ENCODE measurements at regions of chr1 and their contacts with region 1.

Region 1: DNA sequence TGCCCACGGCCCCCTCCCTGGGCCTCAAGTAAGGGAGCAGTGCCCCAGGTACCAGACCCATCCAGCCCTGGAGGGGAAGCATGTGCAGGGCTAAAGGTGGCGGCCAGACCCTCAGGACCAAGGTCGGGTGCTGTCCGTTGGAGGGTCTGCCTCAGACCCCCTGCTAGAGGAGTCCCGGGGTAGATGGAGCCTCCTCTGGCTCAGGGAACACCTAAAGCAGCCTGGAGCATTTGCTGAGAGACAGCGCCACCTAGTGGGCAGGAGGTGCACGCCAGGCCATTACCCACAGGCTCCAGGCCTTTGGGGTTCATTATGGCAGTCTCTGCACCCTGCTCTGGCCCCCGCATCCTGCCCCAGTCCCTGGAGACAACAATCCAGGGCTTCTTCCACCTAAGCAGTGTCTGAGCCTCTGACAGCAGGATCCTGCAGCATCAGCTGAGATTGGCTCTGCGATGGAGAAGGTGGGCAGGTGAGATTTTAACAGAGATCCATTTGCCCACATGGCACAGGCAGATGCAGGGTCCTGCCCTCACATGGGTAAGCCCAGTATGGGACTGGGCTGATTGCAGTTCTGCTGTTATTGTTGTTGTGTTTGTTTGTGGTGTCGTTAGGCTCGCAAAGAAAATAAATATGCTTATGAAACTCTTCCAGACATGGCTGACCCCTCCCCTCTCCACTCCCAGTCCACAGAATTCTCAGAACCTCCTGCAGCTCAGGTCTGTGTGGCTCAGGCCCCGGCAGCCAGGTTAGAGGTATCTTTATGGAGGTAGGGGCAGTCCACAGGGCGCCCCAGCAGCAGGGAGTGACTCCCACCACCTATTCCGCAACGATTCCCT is 42.4 kb downstream of the CTNNBIP1 start:
- DNase-seq: peak; percentile 80 to 90
- ATAC-seq: peak; percentile 84 to 94 (median 87)
- H3K4me3 ChIP-seq: no peak overlapping the region
- H3K27ac ChIP-seq: no peak overlapping the region
- H3K4me1 ChIP-seq: peaks cover 18% of the 10 kb centered on the region
- H3K27me3 ChIP-seq: no peaks in the 10 kb centered on the region
- CTCF ChIP-seq: peak; percentile 99

Region 2: DNA sequence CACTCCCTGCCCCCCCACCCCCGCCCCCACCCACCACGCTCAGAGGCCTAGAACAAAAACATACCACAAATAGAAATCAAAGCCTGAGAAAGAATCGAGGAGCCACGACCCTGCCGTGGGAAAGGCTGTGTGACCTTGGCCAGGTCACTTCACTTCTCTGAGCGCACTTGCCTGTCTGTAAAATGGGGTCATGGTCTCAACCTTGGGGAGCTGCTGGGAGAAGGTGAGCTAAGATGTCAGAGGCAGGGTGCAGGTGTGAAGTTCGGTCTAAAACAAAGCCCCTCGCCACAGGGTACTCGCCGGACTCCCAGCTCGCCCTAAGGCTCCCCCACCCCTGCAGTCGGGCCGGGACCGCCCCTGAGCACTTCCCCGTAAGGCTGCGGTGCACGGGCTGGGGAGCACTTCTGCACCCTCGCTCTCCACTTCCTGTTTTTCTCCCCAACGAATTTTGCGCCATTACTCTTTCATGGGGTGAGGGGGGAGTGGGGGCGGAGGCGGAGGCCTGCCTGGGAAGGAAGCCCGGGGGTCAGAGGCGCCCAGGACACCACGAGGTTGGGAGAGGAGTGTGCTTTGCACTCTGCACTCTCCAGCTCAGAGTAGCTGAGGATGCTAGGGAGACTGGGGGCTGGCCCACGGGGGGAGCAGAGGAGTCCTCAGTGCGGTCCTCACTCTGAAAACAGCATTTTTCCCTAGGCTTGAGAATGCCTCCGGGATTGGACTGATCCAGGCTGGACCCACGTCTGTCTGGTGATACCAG is 238.0 kb before region 1 on chr1:
- intact Hi-C with region 1: loop called (anchors 2 to 5 kb)
- DNase-seq: peak; percentile 46 to 73
- ATAC-seq: peak in 3 of 4 donors; percentile 16 to 18 (median 16)
- H3K4me3 ChIP-seq: no peak overlapping the region
- H3K27ac ChIP-seq: no peak overlapping the region
- H3K4me1 ChIP-seq: no peaks in the 10 kb centered on the region
- H3K27me3 ChIP-seq: peaks cover 0 to 2% (median 0%) of the 10 kb centered on the region in 3 donors
- CTCF ChIP-seq: no peak

Region 3: GRCh38 chr1:9724706-9725476 is 142.7 kb before region 1 on chr1:
- intact Hi-C with region 1: loop called in 1 of 2 experiments (anchors 10 kb)
- DNase-seq: peak in 1 of 2 donors; percentile 45
- ATAC-seq: peak; percentile 43 to 77 (median 68)
- H3K4me3 ChIP-seq: no peak overlapping the region
- H3K27ac ChIP-seq: no peak overlapping the region
- H3K4me1 ChIP-seq: no peaks in the 10 kb centered on the region
- H3K27me3 ChIP-seq: no peaks in the 10 kb centered on the region
- CTCF ChIP-seq: peak; percentile 61

Region 4: DNA sequence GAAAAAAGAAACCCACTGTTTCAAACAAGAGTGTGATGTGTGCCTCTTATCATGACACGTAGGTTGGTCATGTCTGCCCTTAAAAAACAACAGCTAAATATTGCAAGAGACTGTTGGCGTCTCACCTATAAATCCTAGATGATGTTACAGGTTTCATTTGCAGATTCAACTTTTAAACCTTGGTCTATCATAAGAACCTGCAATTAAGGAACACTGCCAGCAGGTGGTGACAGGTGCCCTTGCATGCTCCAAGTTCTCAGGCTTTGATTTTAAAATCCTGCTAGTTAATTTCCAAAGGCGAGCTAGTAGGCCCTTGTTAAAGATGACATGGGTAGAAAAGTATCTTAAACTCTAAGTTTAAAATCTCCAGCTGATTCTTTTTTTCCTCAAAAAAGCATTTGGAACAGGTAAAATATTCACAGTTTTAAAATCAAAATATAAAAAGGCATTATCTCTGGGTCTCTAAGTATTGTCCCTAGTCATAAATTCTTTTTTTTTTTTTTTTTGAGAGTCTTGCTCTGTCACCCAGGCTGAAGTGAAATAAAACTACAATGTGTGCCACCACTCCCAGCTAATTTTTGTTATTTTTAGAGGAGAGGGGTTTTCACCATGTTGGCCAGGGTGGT is 83.0 kb before region 1 on chr1:
- intact Hi-C with region 1: loop called (anchors 1 to 5 kb)
- DNase-seq: no peak
- ATAC-seq: peak in 1 of 4 donors; percentile 74
- H3K4me3 ChIP-seq: no peak overlapping the region
- H3K27ac ChIP-seq: no peak overlapping the region
- H3K4me1 ChIP-seq: no peaks in the 10 kb centered on the region
- H3K27me3 ChIP-seq: no peaks in the 10 kb centered on the region
- CTCF ChIP-seq: peak; percentile 74

Region 5: GRCh38 chr1:9823943-9824701 is 43.5 kb before region 1 on chr1 and contains the start of gene CLSTN1:
- intact Hi-C with region 1: loop called in 1 of 2 experiments (anchors 5 kb)
- DNase-seq: peak; percentile 93 to 95
- ATAC-seq: peak; percentile 69 to 83 (median 78)
- H3K4me3 ChIP-seq: peak within 1 kb of the TSS; percentile 73
- H3K27ac ChIP-seq: peak within 1 kb of the TSS; percentile 83
- H3K4me1 ChIP-seq: peaks cover 36% of the 10 kb centered on the region
- H3K27me3 ChIP-seq: no peaks in the 10 kb centered on the region
- CTCF ChIP-seq: no peak
- total RNA-seq, gene CLSTN1: 19.7 to 48.7 (median 23.8) TPM